A673 (cell line): ENCODE measurements at regions of chr11 and their contacts with region 1.

Region 1: GRCh38 chr11:14422052-14422813 is 63.2 kb upstream of the RRAS2 start:
- DNase-seq: peak; percentile 90
- H3K4me3 ChIP-seq: no peak overlapping the region
- H3K27ac ChIP-seq: no peak overlapping the region
- H3K4me1 ChIP-seq: peaks cover 14% of the 10 kb centered on the region
- H3K27me3 ChIP-seq: no peaks in the 10 kb centered on the region
- CTCF ChIP-seq: no peak

Region 2: GRCh38 chr11:14237444-14237961 is 184.7 kb before region 1 on chr11:
- CTCF ChIA-PET with region 1: no interaction called
- POLR2A ChIA-PET with region 1: no interaction called
- intact Hi-C with region 1: no loop called
- DNase-seq: no peak
- H3K4me3 ChIP-seq: no peak overlapping the region
- H3K27ac ChIP-seq: no peak overlapping the region
- H3K4me1 ChIP-seq: no peaks in the 10 kb centered on the region
- H3K27me3 ChIP-seq: peaks cover 16% of the 10 kb centered on the region
- CTCF ChIP-seq: no peak

Region 3: GRCh38 chr11:14300661-14301304 is 121.5 kb before region 1 on chr11:
- CTCF ChIA-PET with region 1: interaction called, 14 read pairs
- POLR2A ChIA-PET with region 1: no interaction called
- intact Hi-C with region 1: loop called (anchors 2 kb)
- DNase-seq: peak; percentile 75
- H3K4me3 ChIP-seq: no peak overlapping the region
- H3K27ac ChIP-seq: no peak overlapping the region
- H3K4me1 ChIP-seq: peaks cover 11% of the 10 kb centered on the region
- H3K27me3 ChIP-seq: no peaks in the 10 kb centered on the region
- CTCF ChIP-seq: peak; percentile 76

Region 4: DNA sequence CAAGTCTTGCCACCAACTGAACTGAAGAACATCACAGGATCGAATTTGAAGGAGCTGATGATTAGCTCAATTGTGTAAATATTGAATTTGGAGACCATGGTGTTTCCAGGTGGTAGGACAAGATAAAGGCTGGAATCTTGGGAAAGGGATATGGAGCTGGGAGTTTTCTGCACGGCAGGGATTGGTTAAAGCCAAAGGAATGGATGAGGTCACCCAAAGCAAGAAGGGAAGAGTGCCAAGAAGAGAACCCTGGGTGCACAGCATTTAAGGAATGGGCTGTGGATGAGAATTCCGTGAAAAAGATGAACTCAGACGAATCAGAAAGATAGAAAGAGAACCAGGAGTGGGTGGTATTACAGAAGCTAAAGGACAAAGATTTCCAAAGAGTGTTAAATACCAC is 33.9 kb before region 1 on chr11:
- CTCF ChIA-PET with region 1: no interaction called
- POLR2A ChIA-PET with region 1: interaction called, 12 read pairs
- intact Hi-C with region 1: no loop called
- DNase-seq: no peak
- H3K4me3 ChIP-seq: no peak overlapping the region
- H3K27ac ChIP-seq: no peak overlapping the region
- H3K4me1 ChIP-seq: no peaks in the 10 kb centered on the region
- H3K27me3 ChIP-seq: no peaks in the 10 kb centered on the region
- CTCF ChIP-seq: no peak

Region 5: DNA sequence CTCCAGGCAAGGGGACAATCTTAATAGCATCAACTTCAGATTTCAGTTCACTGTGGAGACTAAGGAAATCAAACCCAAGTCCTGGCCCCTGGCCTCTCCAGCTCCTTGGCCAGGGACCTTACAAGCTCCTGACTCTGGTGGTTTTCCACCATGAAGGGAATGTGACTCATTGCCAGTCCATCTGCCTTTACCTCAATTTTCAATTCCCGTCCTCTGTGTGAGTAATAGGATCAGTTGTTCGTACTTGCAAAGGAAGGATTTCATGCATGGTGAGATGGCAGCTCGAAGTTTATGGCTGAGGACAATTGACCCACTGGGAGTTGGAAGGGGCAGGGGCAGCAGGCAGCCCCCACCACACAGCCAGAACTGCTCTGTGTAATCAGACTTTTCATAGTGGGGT is 734.9 kb after region 1 on chr11:
- CTCF ChIA-PET with region 1: no interaction called
- POLR2A ChIA-PET with region 1: no interaction called
- intact Hi-C with region 1: no loop called
- DNase-seq: no peak
- H3K4me3 ChIP-seq: no peak overlapping the region
- H3K27ac ChIP-seq: no peak overlapping the region
- H3K4me1 ChIP-seq: no peaks in the 10 kb centered on the region
- H3K27me3 ChIP-seq: no peaks in the 10 kb centered on the region
- CTCF ChIP-seq: no peak